ENCODE measurements at regions of chr12 and their contacts with region 1.

Region 1: GRCh38 chr12:53213348-53213747 is 6.3 kb upstream of the ITGB7 start:
- DNase-seq: peak; percentile 78 to 79
- H3K4me3 ChIP-seq: no peak overlapping the region
- H3K27ac ChIP-seq: no peak overlapping the region
- H3K4me1 ChIP-seq: peaks cover 0 to 28% of the 10 kb centered on the region in 2 donors
- H3K27me3 ChIP-seq: no peaks in the 10 kb centered on the region
- CTCF ChIP-seq: peak; percentile 63 to 95 (median 92)
- POLR2A ChIP-seq: no peak

Region 2: DNA sequence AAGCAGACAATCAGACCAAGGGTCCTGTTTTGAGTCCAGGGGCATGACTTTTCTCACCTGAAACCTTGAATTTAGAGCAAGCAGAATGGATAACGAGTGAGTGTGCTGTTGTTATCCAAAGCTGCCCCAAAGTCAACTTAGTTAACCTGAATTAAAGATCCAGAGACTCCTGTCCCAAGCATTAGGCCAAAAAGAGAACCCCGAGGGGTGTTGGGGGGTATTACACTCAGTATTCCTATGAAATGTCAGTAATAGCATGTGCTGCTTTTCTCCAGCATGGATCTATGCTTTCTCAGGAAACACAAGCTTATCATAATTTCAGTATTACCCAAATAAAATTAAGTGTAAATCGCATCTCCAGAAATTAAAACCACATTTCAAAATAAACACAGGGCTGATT is 188.1 kb before region 1 on chr12:
- intact Hi-C with region 1: no loop called
- DNase-seq: no peak
- H3K4me3 ChIP-seq: no peak overlapping the region
- H3K27ac ChIP-seq: no peak overlapping the region
- H3K4me1 ChIP-seq: no peaks in the 10 kb centered on the region
- H3K27me3 ChIP-seq: no peaks in the 10 kb centered on the region
- CTCF ChIP-seq: no peak
- POLR2A ChIP-seq: no peak

Region 3: GRCh38 chr12:53251477-53252348 is 38.4 kb after region 1 on chr12:
- intact Hi-C with region 1: loop called (anchors 5 kb)
- DNase-seq: peak; percentile 75 to 79
- H3K4me3 ChIP-seq: peak overlapping the region; percentile 74 to 91 (median 82)
- H3K27ac ChIP-seq: peak overlapping the region; percentile 81 to 91 (median 86)
- H3K4me1 ChIP-seq: peaks cover 17 to 18% of the 10 kb centered on the region in 2 donors
- H3K27me3 ChIP-seq: no peaks in the 10 kb centered on the region
- CTCF ChIP-seq: peak in 4 of 6 experiments; percentile 24 to 53 (median 44)
- POLR2A ChIP-seq: peak in 1 of 2 donors; percentile 53

Region 4: GRCh38 chr12:53287741-53288216 is 74.4 kb after region 1 on chr12:
- intact Hi-C with region 1: loop called (anchors 2 kb)
- DNase-seq: peak; percentile 76 to 78
- H3K4me3 ChIP-seq: no peak overlapping the region
- H3K27ac ChIP-seq: no peak overlapping the region
- H3K4me1 ChIP-seq: no peaks in the 10 kb centered on the region
- H3K27me3 ChIP-seq: no peaks in the 10 kb centered on the region
- CTCF ChIP-seq: peak in 5 of 6 experiments; percentile 40 to 83 (median 72)
- POLR2A ChIP-seq: no peak

Measured in thyroid gland (tissue), 4 donors.